Common myeloid progenitor, CD34-positive (primary cell): ENCODE measurements at regions of chr6 and their contacts with region 1.

Region 1: GRCh38 chr6:158072083-158072721 is 90.5 kb downstream of the SYNJ2 start:
- DNase-seq: peak; percentile 58 to 64 (median 63)
- H3K4me3 ChIP-seq: no peak overlapping the region
- H3K27ac ChIP-seq: no peak overlapping the region
- H3K4me1 ChIP-seq: peaks cover 4 to 38% (median 32%) of the 10 kb centered on the region in 4 experiments
- H3K27me3 ChIP-seq: no peaks in the 10 kb centered on the region

Region 2: DNA sequence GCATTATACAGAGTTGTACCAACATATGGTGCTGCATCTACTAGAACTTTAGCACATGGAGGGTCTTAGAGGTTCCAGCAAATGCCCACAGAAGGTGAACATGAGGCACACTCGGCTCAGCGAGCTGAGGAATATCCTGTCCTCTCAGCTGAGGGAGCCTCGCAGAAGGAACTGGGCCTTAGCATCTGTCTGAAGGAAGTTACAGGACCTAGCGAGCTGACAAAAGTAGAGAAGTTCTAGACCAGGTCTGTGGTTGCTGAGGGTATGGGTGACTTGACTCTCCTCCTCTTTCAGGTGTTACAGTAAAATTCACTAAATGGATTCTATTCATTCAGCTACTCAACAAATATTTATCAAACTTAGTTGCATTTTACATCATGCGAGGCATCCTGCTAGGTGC is 534.0 kb before region 1 on chr6:
- CTCF ChIA-PET with region 1: no interaction called
- POLR2A ChIA-PET with region 1: no interaction called
- DNase-seq: peak in 1 of 3 donors; percentile 26
- H3K4me3 ChIP-seq: no peak overlapping the region
- H3K27ac ChIP-seq: no peak overlapping the region
- H3K4me1 ChIP-seq: peaks cover 11 to 59% (median 27%) of the 10 kb centered on the region in 4 experiments
- H3K27me3 ChIP-seq: no peaks in the 10 kb centered on the region

Region 3: DNA sequence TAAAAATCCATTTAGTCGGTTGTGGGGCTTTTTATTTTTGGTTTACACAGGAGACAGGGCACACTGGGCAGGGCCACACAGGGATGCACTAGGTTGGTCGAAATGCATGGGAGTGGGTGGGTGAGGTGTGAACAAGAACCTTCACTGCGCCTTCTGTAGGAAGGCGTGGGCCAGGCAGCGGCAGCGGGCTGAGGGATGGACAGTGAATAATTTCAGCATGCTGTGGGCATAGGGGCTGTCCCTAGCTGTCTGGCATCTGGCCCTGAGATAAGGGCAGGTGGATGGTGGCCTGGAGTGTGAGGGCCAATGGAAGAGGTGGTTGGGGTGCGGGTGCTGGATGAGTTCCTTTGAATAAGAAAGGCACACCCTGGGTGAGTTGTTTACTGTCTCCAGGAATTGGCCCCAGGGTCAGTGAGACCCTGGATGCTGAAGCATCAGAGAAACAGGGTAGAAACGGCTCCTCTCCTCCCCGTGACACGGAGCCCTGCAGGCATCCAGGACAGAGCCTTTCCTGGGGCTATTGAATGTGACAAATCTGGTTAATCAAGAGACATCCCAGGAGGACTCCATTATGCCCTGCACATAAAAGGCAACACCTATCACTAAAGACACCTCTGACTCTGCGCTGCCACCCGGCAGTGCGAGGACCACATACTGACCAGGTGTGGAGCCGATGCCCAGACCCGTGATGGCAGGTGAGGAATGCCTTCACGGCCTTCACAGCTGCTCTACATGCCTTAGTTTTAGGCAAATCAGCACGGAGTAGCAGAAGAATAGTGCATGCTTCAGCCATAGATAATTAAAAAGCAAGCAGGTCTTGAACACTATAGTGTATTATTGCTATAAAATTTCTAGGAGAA is 372.2 kb before region 1 on chr6:
- CTCF ChIA-PET with region 1: no interaction called
- POLR2A ChIA-PET with region 1: no interaction called
- DNase-seq: no peak
- H3K4me3 ChIP-seq: no peak overlapping the region
- H3K27ac ChIP-seq: no peak overlapping the region
- H3K4me1 ChIP-seq: no peaks in the 10 kb centered on the region
- H3K27me3 ChIP-seq: no peaks in the 10 kb centered on the region

Region 4: GRCh38 chr6:157946865-157947532 is 125.2 kb before region 1 on chr6:
- CTCF ChIA-PET with region 1: interaction called, 22 read pairs
- POLR2A ChIA-PET with region 1: no interaction called
- DNase-seq: peak; percentile 52 to 78 (median 77)
- H3K4me3 ChIP-seq: no peak overlapping the region
- H3K27ac ChIP-seq: no peak overlapping the region
- H3K4me1 ChIP-seq: peaks cover 0 to 7% (median 0%) of the 10 kb centered on the region in 4 experiments
- H3K27me3 ChIP-seq: no peaks in the 10 kb centered on the region

Region 5: GRCh38 chr6:158026054-158026900 is 45.9 kb before region 1 on chr6:
- CTCF ChIA-PET with region 1: interaction called, 105 read pairs
- POLR2A ChIA-PET with region 1: no interaction called
- DNase-seq: peak; percentile 99 to 100 (median 100)
- H3K4me3 ChIP-seq: peak overlapping the region in 5 of 7 experiments; percentile 21 to 64 (median 48)
- H3K27ac ChIP-seq: peak overlapping the region; percentile 68 to 86
- H3K4me1 ChIP-seq: peaks cover 4 to 37% (median 35%) of the 10 kb centered on the region in 4 experiments
- H3K27me3 ChIP-seq: no peaks in the 10 kb centered on the region

Region 6: DNA sequence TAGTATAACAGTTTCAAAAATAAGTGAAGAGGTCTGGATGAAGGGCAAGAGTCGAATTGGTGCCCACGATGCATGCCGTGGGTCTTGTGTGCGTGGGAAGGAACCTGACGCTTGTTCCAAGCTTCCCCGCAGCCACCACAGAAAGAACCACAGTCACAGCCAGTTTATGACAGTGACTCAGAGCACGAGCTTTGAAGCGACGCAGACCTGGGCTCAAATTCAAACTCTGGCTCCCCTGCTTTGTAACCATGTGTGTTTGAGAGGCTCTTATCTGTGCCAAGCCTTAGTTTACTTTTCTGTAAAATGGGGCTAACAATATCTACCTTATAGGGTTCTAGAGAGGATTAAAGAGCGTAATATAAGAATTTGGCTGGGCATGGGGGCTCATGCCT is 25.1 kb before region 1 on chr6:
- CTCF ChIA-PET with region 1: interaction called, 77 read pairs
- POLR2A ChIA-PET with region 1: interaction called, 5 read pairs
- DNase-seq: peak in 2 of 3 donors; percentile 62 to 77
- H3K4me3 ChIP-seq: no peak overlapping the region
- H3K27ac ChIP-seq: no peak overlapping the region
- H3K4me1 ChIP-seq: peaks cover 0 to 12% (median 0%) of the 10 kb centered on the region in 4 experiments
- H3K27me3 ChIP-seq: no peaks in the 10 kb centered on the region

Region 7: DNA sequence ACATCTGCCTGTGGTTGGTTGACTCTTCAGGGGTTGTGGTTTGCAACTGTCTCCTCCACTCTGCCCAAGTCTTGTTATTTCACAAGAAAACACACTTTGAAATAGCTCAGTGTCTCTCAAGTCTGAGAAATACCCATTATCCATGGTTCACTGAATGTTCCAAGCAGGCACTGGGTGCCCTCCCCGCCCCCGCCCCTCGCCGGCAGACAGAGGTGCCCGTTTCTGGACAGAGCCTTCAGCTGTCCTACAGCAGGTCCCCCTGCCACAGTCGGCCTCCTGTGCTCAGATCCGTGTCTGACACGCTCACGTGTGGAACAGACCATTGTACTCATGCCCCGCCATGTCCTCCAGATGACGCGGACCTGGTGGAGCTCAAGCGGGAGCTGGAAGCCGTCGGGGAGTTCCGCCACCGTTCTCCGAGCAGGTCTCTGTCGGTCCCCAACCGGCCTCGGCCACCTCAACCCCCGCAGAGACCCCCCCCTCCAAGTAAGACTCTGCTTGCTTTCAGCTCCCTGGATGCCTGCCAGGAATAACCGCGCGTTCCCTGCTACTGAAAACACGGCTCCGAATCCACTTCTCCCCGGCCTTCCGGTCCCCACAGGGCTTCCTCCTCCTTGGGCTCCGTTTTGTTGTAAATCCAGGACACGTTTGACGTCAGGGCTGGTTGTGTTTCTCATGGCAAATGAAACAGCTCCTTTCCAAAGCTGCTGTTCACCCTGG is 14.5 kb after region 1 on chr6:
- CTCF ChIA-PET with region 1: interaction called, 26 read pairs
- POLR2A ChIA-PET with region 1: no interaction called
- DNase-seq: peak; percentile 19 to 89 (median 85)
- H3K4me3 ChIP-seq: no peak overlapping the region
- H3K27ac ChIP-seq: no peak overlapping the region
- H3K4me1 ChIP-seq: peaks cover 0 to 22% (median 11%) of the 10 kb centered on the region in 4 experiments
- H3K27me3 ChIP-seq: no peaks in the 10 kb centered on the region

Region 8: GRCh38 chr6:158185729-158186456 is 113.7 kb after region 1 on chr6:
- CTCF ChIA-PET with region 1: no interaction called
- POLR2A ChIA-PET with region 1: no interaction called
- DNase-seq: no peak
- H3K4me3 ChIP-seq: no peak overlapping the region
- H3K27ac ChIP-seq: no peak overlapping the region
- H3K4me1 ChIP-seq: no peaks in the 10 kb centered on the region
- H3K27me3 ChIP-seq: no peaks in the 10 kb centered on the region